ENCODE measurements at regions of chr9 and their contacts with region 1.

Region 1: GRCh38 chr9:21326526-21327139 is 8.6 kb downstream of the KLHL9 start:
- DNase-seq: peak; percentile 42
- H3K27ac ChIP-seq: no peak overlapping the region
- CTCF ChIP-seq: peak; percentile 89

Region 2: GRCh38 chr9:21110708-21111576 is 215.7 kb before region 1 on chr9:
- CTCF ChIA-PET with region 1: no interaction called
- POLR2A ChIA-PET with region 1: no interaction called
- DNase-seq: peak; percentile 57
- H3K27ac ChIP-seq: no peak overlapping the region
- CTCF ChIP-seq: peak; percentile 96

Region 3: GRCh38 chr9:21443849-21444625 is 117.4 kb after region 1 on chr9:
- CTCF ChIA-PET with region 1: interaction called, 10 read pairs
- POLR2A ChIA-PET with region 1: no interaction called
- DNase-seq: no peak
- H3K27ac ChIP-seq: no peak overlapping the region
- CTCF ChIP-seq: no peak

Region 4: DNA sequence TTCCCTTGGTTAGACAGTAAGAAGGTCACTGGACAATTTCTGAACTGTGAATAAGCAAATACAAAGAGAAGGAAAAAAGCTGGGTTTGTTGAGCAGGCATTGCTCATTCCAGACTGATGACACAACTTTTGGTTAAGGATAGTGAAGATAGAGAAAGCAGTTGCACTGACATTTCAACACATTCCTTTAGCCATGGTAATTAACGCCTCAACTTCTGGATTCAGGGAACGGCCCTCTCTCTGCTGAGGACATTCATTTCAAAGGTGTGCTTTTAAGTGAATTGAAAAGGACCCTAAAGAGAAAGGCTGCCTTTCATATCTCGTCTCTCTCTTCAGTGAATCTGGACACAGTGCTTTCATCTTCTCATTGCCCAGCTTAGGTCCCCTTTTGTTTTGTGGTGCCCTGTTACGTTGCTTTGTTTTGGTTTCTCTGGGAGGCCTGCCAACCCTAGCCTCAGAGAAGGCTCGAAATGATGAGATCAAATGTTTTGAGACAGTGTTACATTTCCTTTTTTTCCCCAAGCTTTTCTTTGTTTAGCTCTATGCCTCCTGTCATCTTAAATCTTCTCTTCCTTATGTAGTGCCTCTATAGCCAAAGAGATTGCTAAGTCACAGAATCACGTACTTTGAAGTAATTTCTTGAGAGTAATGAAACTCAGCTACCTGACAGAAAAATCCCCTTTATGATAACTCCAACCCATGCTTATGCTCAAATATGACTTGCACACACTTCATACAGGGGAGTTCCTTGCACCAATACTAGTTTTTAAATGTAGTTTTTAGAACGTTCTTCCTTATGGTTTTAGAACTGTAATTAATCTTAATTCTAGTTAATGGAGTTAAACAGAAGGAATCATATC is 249.9 kb after region 1 on chr9:
- CTCF ChIA-PET with region 1: no interaction called
- POLR2A ChIA-PET with region 1: no interaction called
- DNase-seq: peak; percentile 69
- H3K27ac ChIP-seq: peak overlapping the region; percentile 50
- CTCF ChIP-seq: no peak